Left ventricle myocardium inferior (tissue), 1 donor: ENCODE measurements at regions of chr3 and their contacts with region 1.

Region 1: DNA sequence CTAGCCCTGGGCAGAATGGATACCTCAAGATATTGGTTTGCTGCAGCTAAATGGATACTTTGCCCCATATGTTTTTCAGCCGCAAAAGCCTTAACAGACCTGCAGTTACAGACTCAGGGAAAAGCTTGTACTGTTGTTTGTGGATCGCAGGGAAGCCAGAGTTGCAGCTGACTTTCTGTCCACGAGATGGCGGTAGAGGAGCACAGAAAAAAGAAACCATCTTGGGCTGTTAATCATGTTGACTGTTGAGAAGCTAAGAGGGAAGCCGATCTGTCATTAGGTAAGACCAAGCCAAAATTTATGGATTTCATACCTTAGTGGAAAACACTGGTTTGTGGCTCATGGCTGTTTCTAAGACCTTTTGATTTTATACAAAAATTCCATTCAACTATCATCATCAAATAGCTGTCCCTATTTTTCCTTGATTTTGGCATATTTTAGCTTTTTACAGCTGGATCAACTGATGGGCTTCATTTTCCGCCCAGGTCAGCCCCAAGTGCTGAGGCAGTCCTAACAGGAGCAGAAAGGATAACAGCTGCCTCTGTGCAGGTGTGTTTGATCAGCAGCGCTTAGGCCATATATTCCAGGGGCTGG is 205.7 kb upstream of the ZPLD1 start:
- DNase-seq: peak; percentile 55
- H3K4me3 ChIP-seq: no peak overlapping the region
- H3K27ac ChIP-seq: no peak overlapping the region
- H3K4me1 ChIP-seq: peaks cover 12% of the 10 kb centered on the region
- H3K27me3 ChIP-seq: no peaks in the 10 kb centered on the region
- CTCF ChIP-seq: peak; percentile 97

Region 2: DNA sequence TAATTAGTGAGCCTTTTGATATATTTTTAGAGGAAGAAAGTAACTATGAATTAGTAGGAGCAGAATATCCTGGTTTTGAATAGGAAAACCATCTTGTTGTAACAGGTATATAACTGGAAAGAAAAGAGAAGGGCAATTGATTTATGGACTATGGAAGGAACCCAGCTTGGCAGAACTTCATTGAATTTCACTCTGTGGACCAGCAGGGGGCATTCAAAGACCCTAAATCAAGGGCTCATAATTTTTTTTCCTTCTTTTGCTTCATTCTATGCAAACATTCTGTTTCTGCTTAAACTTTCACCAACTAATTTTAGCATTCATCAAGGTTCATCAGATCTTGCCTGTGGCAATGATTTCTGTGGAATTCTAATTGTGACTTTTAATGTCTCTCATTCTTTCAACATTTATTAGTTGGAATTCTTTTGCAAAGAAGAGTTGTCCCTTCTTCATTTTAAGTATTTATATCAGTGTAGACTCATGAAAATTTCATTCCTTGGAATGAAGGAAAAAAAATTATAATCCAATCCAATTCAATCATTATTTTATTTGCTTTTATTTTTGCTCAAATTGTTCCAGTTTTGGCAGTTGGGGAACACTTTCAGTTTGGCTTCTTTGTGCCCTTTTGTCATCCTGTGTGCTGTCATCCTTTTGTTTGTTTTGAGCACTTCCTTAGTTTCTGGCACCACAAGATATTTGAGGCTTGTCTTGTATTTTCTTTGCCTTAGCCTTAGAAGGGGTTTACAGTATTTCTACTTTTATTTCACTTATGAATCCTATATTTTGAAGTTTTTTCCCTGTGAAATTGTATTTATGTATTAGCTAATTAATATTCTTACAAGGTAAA is 419.8 kb before region 1 on chr3:
- intact Hi-C with region 1: loop called (anchors 2 kb)
- DNase-seq: no peak
- H3K4me3 ChIP-seq: no peak overlapping the region
- H3K27ac ChIP-seq: peak overlapping the region; percentile 18
- H3K4me1 ChIP-seq: peaks cover 41% of the 10 kb centered on the region
- H3K27me3 ChIP-seq: no peaks in the 10 kb centered on the region
- CTCF ChIP-seq: peak; percentile 76

Region 3: GRCh38 chr3:102536456-102536855 is 307.3 kb after region 1 on chr3:
- intact Hi-C with region 1: loop called (anchors 5 kb)
- DNase-seq: no peak
- H3K4me3 ChIP-seq: no peak overlapping the region
- H3K27ac ChIP-seq: no peak overlapping the region
- H3K4me1 ChIP-seq: no peaks in the 10 kb centered on the region
- H3K27me3 ChIP-seq: peaks cover 31% of the 10 kb centered on the region
- CTCF ChIP-seq: peak; percentile 57

Region 4: DNA sequence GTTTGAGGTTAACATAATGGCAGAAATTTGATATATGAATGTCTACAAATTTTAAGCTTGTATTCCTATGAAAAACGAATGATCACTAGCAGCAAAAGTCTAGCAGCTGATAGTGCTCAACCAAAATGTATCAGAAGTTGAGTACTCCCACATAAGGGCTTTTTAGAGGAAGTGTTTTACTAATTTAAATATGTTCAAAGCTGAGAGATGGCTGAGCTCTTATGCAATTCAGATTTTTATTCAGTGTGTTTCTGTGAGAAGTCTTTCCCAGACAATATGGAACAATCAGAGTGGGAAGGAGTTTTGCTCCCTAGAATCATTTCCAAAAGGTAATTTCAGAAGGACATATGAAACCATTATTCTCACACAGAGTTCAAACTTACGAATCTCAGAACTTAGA is 532.6 kb after region 1 on chr3:
- intact Hi-C with region 1: no loop called
- DNase-seq: no peak
- H3K4me3 ChIP-seq: no peak overlapping the region
- H3K27ac ChIP-seq: no peak overlapping the region
- H3K4me1 ChIP-seq: no peaks in the 10 kb centered on the region
- H3K27me3 ChIP-seq: no peaks in the 10 kb centered on the region
- CTCF ChIP-seq: no peak